BJ (cell line): ENCODE measurements at regions of chr10 and their contacts with region 1.

Region 1: GRCh38 chr10:60208676-60209269 is 180.9 kb downstream of the ANK3 start:
- DNase-seq: no peak
- H3K4me3 ChIP-seq: no peak overlapping the region
- H3K27me3 ChIP-seq: no peaks in the 10 kb centered on the region; the same call in 1 of the 2 replicates
- CTCF ChIP-seq: peak; percentile 79

Region 2: DNA sequence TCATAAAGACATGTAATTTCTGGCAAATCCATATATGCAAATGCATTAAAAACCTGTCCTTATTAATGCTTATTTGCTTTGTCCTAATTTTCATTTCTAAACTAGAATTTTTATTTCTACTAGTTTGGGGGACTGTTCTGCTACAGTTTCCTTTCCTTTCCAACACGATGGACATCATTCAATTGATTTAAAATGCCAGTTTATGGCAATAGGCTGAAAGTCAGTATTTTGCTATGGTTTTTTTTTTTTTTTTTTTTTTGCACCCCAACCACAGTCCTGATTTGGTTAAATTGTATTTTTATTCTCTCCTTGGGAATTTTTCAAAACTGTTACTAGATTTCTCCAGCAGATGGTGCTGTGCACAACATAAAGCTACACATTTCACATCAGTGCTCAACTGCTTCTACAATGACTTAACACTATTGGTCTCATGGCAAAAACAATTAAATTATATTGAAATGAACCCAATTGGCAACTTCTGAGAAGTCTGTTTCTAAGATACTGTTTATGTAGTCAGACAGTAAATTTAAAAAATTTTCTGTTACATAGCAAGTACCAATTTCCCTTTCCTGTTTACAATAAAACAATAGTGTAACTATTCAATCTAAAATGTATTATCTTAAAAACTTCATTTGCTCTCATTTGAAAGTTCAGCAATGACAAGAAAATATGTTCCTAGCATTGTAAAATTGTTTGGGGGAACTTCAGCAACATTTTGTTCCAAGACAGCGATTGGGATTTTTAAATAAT is 108.6 kb before region 1 on chr10:
- CTCF ChIA-PET with region 1: interaction called, 116 read pairs
- POLR2A ChIA-PET with region 1: no interaction called
- DNase-seq: peak; percentile 9
- H3K4me3 ChIP-seq: no peak overlapping the region
- H3K27me3 ChIP-seq: no peaks in the 10 kb centered on the region
- CTCF ChIP-seq: peak; percentile 52

Region 3: GRCh38 chr10:60114765-60115586 is 93.8 kb before region 1 on chr10:
- CTCF ChIA-PET with region 1: interaction called, 102 read pairs
- POLR2A ChIA-PET with region 1: no interaction called
- DNase-seq: peak; percentile 17
- H3K4me3 ChIP-seq: no peak overlapping the region
- H3K27me3 ChIP-seq: no peaks in the 10 kb centered on the region
- CTCF ChIP-seq: peak; percentile 67

Region 4: GRCh38 chr10:60434418-60435046 is 225.8 kb after region 1 on chr10:
- CTCF ChIA-PET with region 1: interaction called, 115 read pairs
- POLR2A ChIA-PET with region 1: no interaction called
- DNase-seq: no peak
- H3K4me3 ChIP-seq: no peak overlapping the region
- H3K27me3 ChIP-seq: 0 out of 2 replicates have a peak, but pooled peaks cover 1% of the 10 kb centered on the region
- CTCF ChIP-seq: peak; percentile 57

Region 5: GRCh38 chr10:60444494-60445064 is 235.8 kb after region 1 on chr10:
- CTCF ChIA-PET with region 1: interaction called, 25 read pairs
- POLR2A ChIA-PET with region 1: no interaction called
- DNase-seq: no peak
- H3K4me3 ChIP-seq: no peak overlapping the region
- H3K27me3 ChIP-seq: no peaks in the 10 kb centered on the region
- CTCF ChIP-seq: peak; percentile 57